A549 (cell line): ENCODE measurements at regions of chr12 and their contacts with region 1.

Region 1: GRCh38 chr12:54603173-54603814 is 14.8 kb upstream of the PPP1R1A start:
- DNase-seq: peak; percentile 84 to 87
- ATAC-seq: peak; percentile 77 to 96; a peak in 5 of 6 replicates
- H3K4me3 ChIP-seq: no peak overlapping the region
- H3K27ac ChIP-seq: no peak overlapping the region
- H3K4me1 ChIP-seq: no peaks in the 10 kb centered on the region
- CTCF ChIP-seq: peak; percentile 66
- EP300 ChIP-seq: no peak
- POLR2A ChIP-seq: no peak
- RAD21 ChIP-seq: peak; percentile 33 to 43; a peak in 3 of 5 replicates

Region 2: DNA sequence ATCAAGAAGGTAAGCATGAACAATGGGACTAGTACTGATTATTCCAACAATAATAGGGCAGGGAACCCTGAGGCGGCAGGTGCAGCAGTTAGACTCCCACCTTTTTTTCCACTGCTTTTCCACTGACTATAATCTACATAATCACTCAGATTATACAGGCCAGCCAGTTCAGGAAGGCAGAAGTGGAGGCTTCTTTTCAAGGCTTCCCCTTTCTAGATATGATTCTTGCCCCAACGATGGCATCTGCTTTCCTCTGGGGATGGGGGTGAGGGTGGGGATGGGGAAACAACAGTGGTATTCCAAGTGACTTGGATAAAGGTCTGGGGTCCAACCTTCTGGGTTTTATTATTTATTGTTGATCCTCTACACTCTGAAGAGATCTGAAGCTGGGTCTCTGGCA is 105.4 kb before region 1 on chr12:
- CTCF ChIA-PET with region 1: no interaction called
- POLR2A ChIA-PET with region 1: no interaction called
- DNase-seq: no peak
- ATAC-seq: no peak; a peak in 1 of 6 replicates
- H3K4me3 ChIP-seq: no peak overlapping the region
- H3K27ac ChIP-seq: no peak overlapping the region
- H3K4me1 ChIP-seq: no peaks in the 10 kb centered on the region
- CTCF ChIP-seq: no peak
- EP300 ChIP-seq: no peak
- POLR2A ChIP-seq: no peak
- RAD21 ChIP-seq: no peak

Region 3: DNA sequence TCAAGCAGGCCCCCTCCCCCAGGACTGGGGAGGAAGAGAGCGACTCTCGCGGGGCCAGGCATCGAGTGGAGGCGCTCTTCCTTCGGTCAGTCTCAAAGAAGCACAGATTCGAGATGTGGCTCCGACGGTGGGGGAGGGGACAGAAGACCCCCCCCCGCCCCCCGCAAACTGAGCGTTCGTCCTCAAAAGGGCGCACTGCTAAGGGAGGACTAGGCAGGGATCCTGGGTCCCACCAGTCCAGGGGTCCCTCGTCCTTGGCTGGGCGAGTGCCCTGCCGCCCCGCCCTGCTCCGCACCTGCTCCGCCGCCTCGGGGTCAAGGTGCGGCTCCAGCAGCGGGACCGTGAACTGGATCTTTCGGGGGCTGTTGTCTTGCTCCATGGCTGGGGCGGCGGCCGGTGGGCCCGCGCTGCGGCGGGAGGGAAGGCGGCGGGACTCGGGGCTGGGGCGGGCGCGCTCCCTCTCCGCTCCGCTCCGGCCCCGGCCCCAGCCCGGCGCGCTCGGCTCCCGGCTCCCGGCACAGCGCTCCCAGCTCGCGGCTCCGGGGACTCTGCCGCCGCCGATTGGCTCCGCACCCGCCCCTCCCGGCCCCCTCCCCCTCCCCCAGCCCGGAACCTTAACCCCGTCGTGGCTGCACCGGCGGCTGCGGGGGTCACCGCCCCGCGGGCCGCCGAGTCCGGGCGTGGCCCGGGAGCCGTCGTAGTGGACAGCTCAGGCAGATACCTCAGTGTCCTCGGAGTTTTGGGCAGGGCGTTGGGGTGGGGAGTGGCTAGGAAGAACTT is 15.0 kb before region 1 on chr12 and contains the start of gene PPP1R1A:
- CTCF ChIA-PET with region 1: interaction called, 100 read pairs
- POLR2A ChIA-PET with region 1: no interaction called
- DNase-seq: no peak
- ATAC-seq: peak in 1 of 2 experiments; percentile 55; a peak in 3 of 6 replicates
- H3K4me3 ChIP-seq: peak within 1 kb of the TSS; percentile 57
- H3K27ac ChIP-seq: peak within 1 kb of the TSS in 1 of 2 experiments; percentile 66; a peak in 4 of 6 replicates
- H3K4me1 ChIP-seq: peaks cover 11% of the 10 kb centered on the region
- CTCF ChIP-seq: no peak
- EP300 ChIP-seq: no peak
- POLR2A ChIP-seq: no peak
- RAD21 ChIP-seq: no peak
- polyA plus RNA-seq, gene PPP1R1A: not detected in 2 replicates

Region 4: GRCh38 chr12:54622459-54623183 is 19.3 kb after region 1 on chr12:
- CTCF ChIA-PET with region 1: no interaction called
- POLR2A ChIA-PET with region 1: no interaction called
- DNase-seq: peak in 1 of 2 experiments; percentile 16
- ATAC-seq: peak in 1 of 2 experiments; percentile 80; a peak in 3 of 6 replicates
- H3K4me3 ChIP-seq: no peak overlapping the region
- H3K27ac ChIP-seq: no peak overlapping the region
- H3K4me1 ChIP-seq: no peaks in the 10 kb centered on the region
- CTCF ChIP-seq: no peak
- EP300 ChIP-seq: no peak
- POLR2A ChIP-seq: no peak
- RAD21 ChIP-seq: no peak